ENCODE measurements at regions of chr6 and their contacts with region 1.

Region 1: GRCh38 chr6:159252955-159253508 is 83.8 kb downstream of the FNDC1 start:
- DNase-seq: peak; percentile 78

Region 2: GRCh38 chr6:158970640-158971275 is 282.3 kb before region 1 on chr6:
- CTCF ChIA-PET with region 1: no interaction called
- POLR2A ChIA-PET with region 1: no interaction called
- DNase-seq: no peak

Region 3: DNA sequence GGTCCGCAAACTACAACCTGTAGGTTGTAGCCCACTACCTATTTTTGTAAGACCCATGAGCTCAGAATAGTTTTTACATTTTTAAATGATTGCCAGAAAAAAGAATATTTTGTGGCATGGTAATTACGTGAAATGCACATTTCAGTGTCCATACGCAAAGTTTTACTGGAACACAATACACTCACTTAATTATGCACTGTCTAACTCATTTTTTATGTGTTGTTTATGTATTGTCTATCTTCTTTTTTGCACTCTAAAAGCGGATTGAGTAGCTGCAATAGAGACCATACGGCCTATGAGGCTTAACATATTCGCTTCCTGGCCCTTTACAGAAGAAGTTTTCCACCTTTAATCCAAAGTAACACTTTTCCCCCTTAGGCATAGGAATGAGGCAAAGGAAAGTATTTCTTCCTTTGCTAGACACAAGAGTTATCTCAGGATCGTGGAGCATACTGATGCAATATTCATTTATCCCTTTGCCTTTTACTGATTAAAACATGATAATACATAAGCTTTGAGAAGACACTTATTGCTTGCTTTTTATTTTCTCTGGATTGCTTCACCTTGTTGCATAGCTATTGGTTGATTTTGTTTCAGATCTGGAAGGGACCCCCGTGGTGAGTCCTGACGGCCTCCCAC is 14.0 kb before region 1 on chr6:
- CTCF ChIA-PET with region 1: interaction called, 10 read pairs
- POLR2A ChIA-PET with region 1: no interaction called
- DNase-seq: no peak

Region 4: DNA sequence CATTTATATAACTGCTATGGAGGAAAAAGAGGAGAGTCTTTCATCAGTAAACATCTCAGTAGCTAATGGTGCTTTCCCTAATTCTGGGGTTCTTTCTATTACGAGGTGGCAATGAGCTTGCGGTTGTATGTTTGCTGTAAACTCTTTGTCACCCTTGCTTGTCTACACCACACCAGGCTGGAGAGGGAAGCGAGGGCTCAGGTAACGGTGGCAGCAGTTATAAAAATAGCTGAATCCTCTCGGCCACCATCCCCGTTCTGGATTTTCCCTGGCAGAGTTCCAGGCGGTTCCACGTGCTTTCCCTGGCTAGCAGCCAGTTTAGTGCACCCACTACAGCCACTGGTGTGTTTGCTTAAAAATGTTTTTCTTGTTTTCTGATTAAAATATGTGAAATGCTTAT is 676.8 kb after region 1 on chr6:
- CTCF ChIA-PET with region 1: no interaction called
- POLR2A ChIA-PET with region 1: no interaction called
- DNase-seq: no peak

Region 5: GRCh38 chr6:160378218-160378617 is 1125.2 kb after region 1 on chr6:
- CTCF ChIA-PET with region 1: no interaction called
- POLR2A ChIA-PET with region 1: no interaction called
- DNase-seq: no peak